ENCODE measurements at regions of chr21 and their contacts with region 1.

Region 1: DNA sequence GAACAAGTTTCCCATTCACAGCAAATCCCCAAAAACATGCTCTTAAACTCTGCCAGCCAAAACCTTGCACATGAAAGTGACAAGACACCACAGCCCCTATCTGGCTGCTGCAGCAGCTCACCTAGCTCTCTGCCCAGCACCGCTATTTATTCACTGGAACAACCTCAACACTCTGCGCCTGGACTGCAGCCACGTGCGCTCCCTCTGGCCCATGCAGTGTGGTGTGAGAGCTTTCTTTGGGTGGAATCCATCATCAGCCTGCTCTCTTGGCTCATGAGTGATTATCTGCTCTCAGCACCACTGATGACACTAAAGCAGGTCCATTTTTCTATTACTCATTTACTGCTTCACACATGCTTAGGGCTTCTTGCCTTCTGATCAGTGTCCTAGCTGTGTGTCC is 11.4 kb downstream of the KCNJ6 start:
- DNase-seq: no peak
- ATAC-seq: no peak
- H3K4me3 ChIP-seq: no peak overlapping the region
- H3K4me1 ChIP-seq: no peaks in the 10 kb centered on the region
- CTCF ChIP-seq: no peak

Region 2: DNA sequence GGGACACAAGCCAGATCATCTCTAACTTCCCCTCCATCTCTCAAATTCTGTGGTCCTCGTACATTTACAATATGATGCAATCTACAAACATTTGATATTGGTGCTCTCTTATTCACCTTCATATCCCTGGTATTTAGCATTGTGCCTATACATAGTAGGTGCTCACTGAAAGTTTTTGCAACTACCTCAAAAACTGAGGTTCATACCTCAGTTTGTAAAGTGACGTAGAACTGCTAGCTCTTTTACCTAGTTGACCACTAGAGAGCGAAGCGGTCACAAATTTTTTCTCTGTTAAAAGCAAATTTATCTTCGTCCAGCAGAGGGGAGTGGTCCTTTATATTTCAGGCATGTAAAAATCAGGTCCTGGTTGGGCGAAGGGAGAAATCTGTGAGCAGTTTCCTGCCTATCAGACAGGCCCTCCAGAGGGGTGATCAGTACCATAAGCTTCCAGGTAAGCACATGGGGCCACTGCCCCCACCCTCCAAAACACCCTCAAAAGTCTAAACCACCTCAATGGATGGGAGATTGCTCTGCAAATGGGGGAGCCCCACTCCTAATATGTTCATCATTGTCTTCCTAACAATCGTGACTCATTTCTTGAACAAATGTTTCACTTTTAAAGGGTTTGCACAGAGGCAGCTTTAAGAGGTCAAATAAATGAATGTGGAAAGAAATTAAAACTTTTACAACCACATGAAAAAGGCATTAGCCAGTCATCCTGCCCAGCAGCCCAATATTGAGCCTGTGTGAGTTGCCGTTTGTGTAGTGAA is 927.8 kb before region 1 on chr21:
- intact Hi-C with region 1: no loop called
- DNase-seq: peak in 1 of 3 donors; percentile 30
- ATAC-seq: peak; percentile 40
- H3K4me3 ChIP-seq: no peak overlapping the region
- H3K4me1 ChIP-seq: peaks cover 2% of the 10 kb centered on the region
- CTCF ChIP-seq: no peak

Region 3: DNA sequence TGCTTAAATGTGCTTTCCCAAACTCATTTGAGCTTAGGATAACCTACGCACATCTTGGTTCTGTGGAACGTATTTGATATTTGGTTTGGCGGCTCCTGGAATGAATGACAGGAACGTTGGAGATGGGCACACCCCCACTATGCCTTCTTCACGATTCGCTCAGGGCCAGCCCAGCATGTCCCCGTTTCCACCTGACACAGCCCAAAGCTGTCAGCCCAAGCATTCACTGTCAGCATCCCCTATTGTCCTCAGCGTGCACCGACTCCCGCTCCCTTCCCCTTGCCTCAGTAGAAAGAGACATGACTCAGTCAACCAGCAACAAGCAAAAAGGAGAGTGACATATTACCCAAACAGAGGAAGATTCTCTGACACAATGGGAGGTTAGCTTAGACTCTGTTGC is 170.0 kb before region 1 on chr21:
- intact Hi-C with region 1: no loop called
- DNase-seq: no peak
- ATAC-seq: no peak
- H3K4me3 ChIP-seq: no peak overlapping the region
- H3K4me1 ChIP-seq: no peaks in the 10 kb centered on the region
- CTCF ChIP-seq: no peak

Region 4: DNA sequence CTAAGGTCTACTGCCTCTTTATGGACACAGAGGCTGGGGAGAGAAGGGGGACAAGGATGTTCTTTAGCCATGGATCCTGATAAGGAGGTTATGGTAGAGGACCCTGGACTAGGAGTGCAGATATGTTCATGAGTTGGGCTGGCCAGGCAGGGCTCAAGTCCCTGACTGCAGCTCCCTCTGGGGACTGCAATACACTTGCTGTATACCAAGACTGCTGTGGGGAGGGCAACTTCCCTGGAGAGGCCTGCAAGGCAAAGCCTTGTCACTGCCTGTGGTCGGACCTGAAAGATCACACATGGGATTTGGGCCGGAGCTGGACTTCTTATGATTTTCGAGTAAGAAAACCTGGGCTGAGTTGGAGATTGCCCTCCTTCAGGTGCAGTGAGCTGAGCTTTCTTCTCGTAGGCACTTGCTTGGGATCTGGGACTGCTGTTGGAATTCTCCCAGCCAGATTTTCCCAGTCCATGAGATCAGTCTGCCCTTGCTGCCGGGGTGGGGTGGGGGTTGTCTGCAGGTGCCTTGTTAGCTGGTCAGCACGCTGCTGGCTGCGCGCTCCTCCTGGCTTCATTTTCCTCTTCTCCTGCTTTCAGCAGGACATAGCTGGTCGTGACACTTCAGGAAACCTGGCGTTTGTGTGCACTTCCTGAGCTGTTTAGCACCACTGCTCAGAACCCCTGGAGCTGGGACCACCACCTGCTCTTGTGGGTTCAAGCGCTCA is 60.4 kb after region 1 on chr21:
- intact Hi-C with region 1: loop called in 1 of 2 experiments (anchors 10 kb)
- DNase-seq: no peak
- ATAC-seq: no peak
- H3K4me3 ChIP-seq: no peak overlapping the region
- H3K4me1 ChIP-seq: no peaks in the 10 kb centered on the region
- CTCF ChIP-seq: no peak

Measured in mucosa of descending colon (tissue), 3 donors.